ENCODE measurements at regions of chr20 and their contacts with region 1.

Region 1: GRCh38 chr20:1313236-1313964 is 15.5 kb downstream of the SDCBP2 start:
- DNase-seq: peak; percentile 88
- H3K4me3 ChIP-seq: peak overlapping the region in 3 of 4 donors; percentile 19 to 34 (median 32)
- H3K27ac ChIP-seq: no peak overlapping the region
- H3K4me1 ChIP-seq: peaks cover 0 to 10% (median 8%) of the 10 kb centered on the region in 4 donors
- H3K27me3 ChIP-seq: no peaks in the 10 kb centered on the region
- CTCF ChIP-seq: peak; percentile 94 to 99 (median 95)
- EP300 ChIP-seq: no peak
- POLR2A ChIP-seq: no peak

Region 2: GRCh38 chr20:1437235-1437904 is 124.0 kb after region 1 on chr20:
- intact Hi-C with region 1: loop called (anchors 1 kb)
- DNase-seq: peak; percentile 78
- H3K4me3 ChIP-seq: no peak overlapping the region
- H3K27ac ChIP-seq: no peak overlapping the region
- H3K4me1 ChIP-seq: no peaks in the 10 kb centered on the region
- H3K27me3 ChIP-seq: no peaks in the 10 kb centered on the region
- CTCF ChIP-seq: peak; percentile 67 to 87 (median 78)
- EP300 ChIP-seq: no peak
- POLR2A ChIP-seq: no peak

Region 3: DNA sequence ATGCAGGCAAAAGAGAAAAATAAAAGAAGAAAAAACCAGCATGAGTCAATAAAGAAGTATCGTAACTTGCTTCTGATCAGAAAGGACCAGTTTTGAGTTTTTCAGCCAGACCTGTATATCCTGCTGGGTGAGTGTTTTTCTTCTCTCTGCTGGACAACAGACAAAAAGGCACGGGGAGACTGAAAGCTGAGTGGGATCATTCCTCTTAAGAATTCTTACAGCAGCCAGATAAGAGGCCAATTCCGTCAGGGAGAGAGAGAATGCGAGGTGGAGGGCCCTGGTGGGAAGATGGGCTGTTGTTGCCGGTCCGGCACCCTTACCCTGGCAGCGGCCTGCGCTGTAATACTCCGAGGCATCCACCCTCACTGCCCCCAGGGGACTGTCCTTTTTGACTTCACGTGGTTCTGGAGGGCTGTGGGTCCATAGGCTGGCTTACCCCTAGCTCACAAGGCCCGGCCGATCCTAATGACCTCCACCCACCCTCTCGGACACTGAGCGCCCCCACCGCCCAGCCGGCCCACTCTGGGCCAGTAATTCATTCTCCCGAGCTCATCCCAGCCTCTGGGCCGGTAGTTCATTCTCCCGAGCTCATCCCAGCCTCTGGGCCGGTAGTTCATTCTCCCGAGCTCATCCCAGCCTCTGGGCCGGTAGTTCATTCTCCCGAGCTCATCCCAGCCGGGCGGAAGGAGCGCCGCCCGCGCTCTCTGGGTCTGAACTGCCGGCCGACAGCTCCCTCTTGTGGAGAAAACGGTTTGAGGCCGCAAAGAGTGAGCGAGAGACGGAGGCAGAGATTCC is 463.5 kb after region 1 on chr20:
- intact Hi-C with region 1: loop called (anchors 10 kb)
- DNase-seq: peak; percentile 91
- H3K4me3 ChIP-seq: peak overlapping the region; percentile 38 to 76 (median 58)
- H3K27ac ChIP-seq: peak overlapping the region; percentile 55 to 84 (median 74)
- H3K4me1 ChIP-seq: peaks cover 0 to 16% (median 11%) of the 10 kb centered on the region in 4 donors
- H3K27me3 ChIP-seq: no peaks in the 10 kb centered on the region
- CTCF ChIP-seq: peak; percentile 72 to 82 (median 81)
- EP300 ChIP-seq: no peak
- POLR2A ChIP-seq: no peak

Measured in sigmoid colon (tissue), 7 donors.